Activated B cell treated with CpG ODN at 0.5 μM for 24 hours (primary cell): ENCODE measurements at regions of chr6 and their contacts with region 1.

Region 1: DNA sequence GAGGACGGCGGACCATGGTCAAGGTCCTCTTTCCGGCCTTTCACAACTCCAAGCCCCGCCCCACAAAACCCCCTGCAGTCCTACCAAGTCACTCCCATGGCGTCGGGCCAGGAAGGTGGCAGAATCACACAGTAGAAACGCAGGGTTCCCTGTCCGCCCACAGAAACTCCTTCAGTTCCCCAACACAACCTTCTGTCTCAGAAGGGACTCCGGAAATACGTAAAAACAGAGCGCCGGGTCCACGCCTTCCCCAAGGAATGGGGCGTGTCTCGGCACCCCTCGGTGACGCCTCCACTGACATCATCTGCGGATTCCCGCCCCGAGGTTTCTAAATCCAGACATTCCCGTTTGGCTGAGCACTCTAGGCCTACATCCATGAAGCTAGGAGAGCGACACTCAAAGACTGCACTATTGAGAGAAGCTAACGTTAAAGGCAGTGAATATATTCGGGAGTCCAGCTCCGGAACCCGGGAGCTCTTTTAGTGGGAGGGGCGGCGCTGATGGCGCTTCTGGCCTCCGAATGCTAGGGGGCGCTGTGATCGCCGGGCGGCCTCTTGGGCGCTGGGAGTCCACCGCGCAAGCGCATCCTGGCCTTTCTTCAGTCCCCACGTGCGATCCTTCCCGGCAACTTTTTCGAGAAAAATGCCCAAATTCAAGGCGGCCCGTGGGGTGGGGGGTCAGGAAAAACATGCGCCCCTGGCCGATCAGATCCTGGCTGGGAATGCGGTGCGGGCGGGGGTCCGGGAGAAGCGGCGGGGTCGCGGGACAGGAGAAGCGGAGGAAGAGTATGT is at the starts of genes BYSL and MED20:
- DNase-seq: peak; percentile 95
- ATAC-seq: peak; percentile 91
- H3K4me3 Mint-ChIP-seq: peak within 1 kb of the TSS; percentile 98
- H3K27ac Mint-ChIP-seq: peak within 1 kb of the TSS; percentile 98
- H3K4me1 Mint-ChIP-seq: peaks cover 49% of the 10 kb centered on the region
- H3K27me3 Mint-ChIP-seq: no peaks in the 10 kb centered on the region
- CTCF ChIP-seq: peak; percentile 24
- total RNA-seq, gene BYSL: 39.5 and 43.2 TPM in 2 replicates
- total RNA-seq, gene MED20: 21.1 and 22.2 TPM in 2 replicates

Region 2: DNA sequence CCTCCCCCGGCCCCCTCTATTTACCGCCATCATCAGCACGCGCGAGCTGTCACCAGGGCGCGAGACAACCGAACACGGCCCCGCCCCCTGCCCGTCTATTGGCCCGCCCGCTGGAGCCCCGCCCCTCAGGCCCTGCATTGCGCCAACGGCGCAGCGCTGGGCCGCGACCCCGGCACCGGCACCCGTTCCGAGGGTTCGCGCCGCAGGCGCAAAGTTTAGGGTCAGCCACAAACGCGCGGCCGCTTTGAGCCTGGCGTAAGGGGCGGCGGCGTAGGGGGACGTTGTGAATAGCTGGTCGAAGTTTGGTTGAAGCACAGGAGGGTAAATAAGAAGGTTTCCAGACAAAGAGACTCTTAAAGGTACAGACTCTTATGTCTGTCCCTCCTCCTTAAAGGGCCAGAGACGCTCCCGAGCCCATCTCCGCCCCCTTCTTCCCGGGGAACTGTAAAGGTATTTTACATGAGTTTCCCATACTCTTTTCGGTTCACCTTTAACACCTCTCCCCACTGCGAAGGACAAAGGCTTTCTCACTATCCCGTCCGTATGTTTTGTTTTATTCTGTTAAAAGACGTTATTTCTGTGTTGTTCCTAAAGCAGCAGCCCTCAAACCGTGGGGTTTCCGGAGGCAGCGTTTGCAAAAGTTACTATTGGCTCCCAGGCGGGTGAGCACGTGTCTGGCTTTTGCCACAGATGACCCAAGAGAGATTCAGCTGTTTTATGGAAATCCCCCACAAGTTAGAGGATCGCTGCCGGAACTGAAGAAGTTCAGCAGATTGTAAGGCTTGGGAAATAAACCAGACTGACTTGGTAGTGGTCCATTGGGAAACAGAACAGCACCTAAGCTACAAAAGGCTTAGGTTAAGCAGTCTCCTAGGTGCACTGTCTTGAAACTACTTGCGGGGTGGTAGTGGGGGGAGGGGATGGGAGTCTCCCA is 25.5 kb before region 1 on chr6 and contains the start of gene USP49:
- CTCF ChIA-PET with region 1: interaction called, 21 read pairs
- POLR2A ChIA-PET with region 1: interaction called, 42 read pairs
- intact Hi-C with region 1: loop called (anchors 1 kb)
- DNase-seq: peak; percentile 90
- ATAC-seq: peak; percentile 92
- H3K4me3 Mint-ChIP-seq: no peak within 1 kb of the TSS
- H3K27ac Mint-ChIP-seq: peak within 1 kb of the TSS; percentile 95
- H3K4me1 Mint-ChIP-seq: peaks cover 14% of the 10 kb centered on the region
- H3K27me3 Mint-ChIP-seq: no peaks in the 10 kb centered on the region
- CTCF ChIP-seq: no peak
- total RNA-seq, gene USP49: 7.7 and 8.0 TPM in 2 replicates

Region 3: DNA sequence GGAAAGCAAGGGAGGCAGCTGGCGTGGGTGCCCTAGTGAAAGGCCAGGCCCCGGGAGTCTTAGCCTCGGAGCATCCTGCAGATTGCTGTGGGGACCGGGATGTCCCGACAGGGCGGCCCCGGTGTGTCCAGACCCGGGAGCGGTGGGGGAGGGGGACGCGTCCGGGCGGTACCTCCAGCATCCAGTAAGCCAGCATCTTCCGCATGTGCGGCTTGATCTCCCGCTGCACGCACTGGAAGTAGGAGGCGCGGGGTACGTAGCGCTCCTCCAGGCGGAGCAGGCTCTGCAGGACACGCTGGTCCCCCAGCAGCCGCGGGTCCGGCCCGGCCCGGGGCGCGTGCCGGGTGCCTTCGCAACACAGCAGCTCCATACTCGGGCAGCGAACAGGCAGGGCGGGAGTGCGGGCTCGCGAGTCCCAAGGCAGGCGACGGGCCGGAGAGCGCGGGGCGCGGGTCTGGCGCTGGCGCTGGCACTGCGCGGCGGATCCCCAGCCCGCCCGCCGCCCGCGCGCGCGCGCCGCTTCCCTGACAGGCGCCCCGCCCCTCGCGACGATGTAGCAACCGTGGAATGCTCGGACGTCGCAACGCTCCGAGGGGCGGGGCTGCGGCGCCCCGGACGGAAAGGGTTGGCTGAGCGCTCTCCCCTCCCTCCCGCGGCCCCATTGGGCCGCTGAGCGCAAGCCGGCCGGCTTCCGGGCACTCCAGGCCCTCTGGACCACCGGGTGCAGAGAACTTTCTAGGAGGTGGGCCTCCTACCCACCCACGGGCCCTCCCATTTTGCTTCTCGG is 20.4 kb after region 1 on chr6 and contains the start of gene CCND3:
- CTCF ChIA-PET with region 1: interaction called, 14 read pairs
- POLR2A ChIA-PET with region 1: interaction called, 22 read pairs
- intact Hi-C with region 1: loop called (anchors 1 kb)
- DNase-seq: peak; percentile 85
- ATAC-seq: peak; percentile 92
- H3K4me3 Mint-ChIP-seq: peak within 1 kb of the TSS; percentile 90
- H3K27ac Mint-ChIP-seq: peak within 1 kb of the TSS; percentile 89
- H3K4me1 Mint-ChIP-seq: peaks cover 53% of the 10 kb centered on the region
- H3K27me3 Mint-ChIP-seq: no peaks in the 10 kb centered on the region
- CTCF ChIP-seq: no peak
- total RNA-seq, gene CCND3: 70.7 and 75.2 TPM in 2 replicates

Region 4: DNA sequence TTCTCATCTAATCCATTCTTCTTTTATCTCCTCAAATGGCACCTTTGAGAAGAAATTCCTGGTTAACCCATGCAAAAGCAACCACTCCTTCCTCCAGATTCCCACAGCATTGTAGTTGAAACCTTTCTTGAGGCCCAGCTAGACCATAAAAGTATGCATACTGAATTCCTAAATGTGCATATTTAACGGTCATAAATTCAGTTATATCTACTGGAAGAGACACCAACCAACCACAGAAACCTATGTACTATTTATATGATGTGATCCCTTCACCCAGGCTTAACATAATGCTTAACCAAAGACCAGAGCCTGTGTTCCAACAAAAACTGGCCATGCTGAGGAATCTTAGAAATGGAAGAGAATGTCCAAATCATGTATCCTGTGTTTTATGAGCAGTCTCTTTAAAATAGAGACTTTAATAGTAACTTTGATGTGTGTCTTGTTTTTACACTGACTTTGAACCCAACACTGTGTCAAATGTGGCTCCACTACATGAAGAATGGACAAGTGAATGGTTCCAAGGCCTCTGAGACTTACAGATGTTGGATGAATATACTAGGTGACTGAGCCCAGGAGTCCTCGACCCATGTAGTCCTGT is 117.8 kb after region 1 on chr6:
- CTCF ChIA-PET with region 1: interaction called, 43 read pairs
- POLR2A ChIA-PET with region 1: interaction called, 21 read pairs
- intact Hi-C with region 1: loop called (anchors 1 kb)
- DNase-seq: no peak
- ATAC-seq: no peak
- H3K4me3 Mint-ChIP-seq: peak overlapping the region; percentile 70
- H3K27ac Mint-ChIP-seq: peak overlapping the region; percentile 92
- H3K4me1 Mint-ChIP-seq: peaks cover 59% of the 10 kb centered on the region
- H3K27me3 Mint-ChIP-seq: no peaks in the 10 kb centered on the region
- CTCF ChIP-seq: no peak

Region 5: GRCh38 chr6:42563697-42564505 is 642.8 kb after region 1 on chr6 and contains the start of gene UBR2:
- CTCF ChIA-PET with region 1: no interaction called
- POLR2A ChIA-PET with region 1: no interaction called
- intact Hi-C with region 1: loop called (anchors 10 kb)
- DNase-seq: peak; percentile 73
- ATAC-seq: peak; percentile 96
- H3K4me3 Mint-ChIP-seq: peak within 1 kb of the TSS; percentile 92
- H3K27ac Mint-ChIP-seq: peak within 1 kb of the TSS; percentile 92
- H3K4me1 Mint-ChIP-seq: peaks cover 43% of the 10 kb centered on the region
- H3K27me3 Mint-ChIP-seq: no peaks in the 10 kb centered on the region
- CTCF ChIP-seq: no peak
- total RNA-seq, gene UBR2: 34.3 and 40.8 TPM in 2 replicates